Caco-2 (cell line): ENCODE measurements at regions of chr12 and their contacts with region 1.

Region 1: DNA sequence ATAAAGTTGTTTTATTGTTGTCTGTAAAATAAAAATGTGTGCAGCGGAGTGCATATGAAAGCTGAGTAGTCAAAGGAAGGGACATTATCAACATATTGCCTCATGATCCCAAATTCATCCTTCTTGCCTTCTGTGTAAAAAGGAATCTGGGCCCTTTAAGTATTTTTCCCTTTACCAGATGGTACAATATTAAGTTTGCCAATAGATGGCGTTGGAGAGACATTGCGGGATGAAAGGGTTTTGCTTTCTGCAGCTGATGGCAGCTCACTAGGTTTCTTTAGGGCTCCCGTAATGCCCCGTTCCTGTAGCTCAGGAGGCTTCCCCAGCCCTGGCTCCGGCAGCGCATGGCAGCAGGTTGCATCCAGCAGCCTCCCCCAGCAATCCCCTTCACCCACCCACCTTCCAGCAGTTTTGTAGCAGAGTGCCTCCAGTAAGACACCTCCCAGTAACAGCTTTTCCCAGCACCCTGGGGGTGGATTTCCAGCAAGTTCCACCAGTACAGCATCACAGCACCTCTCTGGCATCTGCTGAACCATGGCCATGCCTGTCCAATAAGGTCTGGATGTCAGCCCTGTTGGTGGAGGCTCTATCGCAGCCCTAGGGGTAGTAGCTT is 354.4 kb downstream of the MED13L start:
- DNase-seq: peak in 1 of 2 experiments; percentile 63
- H3K4me3 ChIP-seq: no peak overlapping the region
- H3K4me3 Mint-ChIP-seq: no peak overlapping the region
- H3K27ac Mint-ChIP-seq: no peak overlapping the region
- H3K4me1 ChIP-seq: no peaks in the 10 kb centered on the region
- H3K4me1 Mint-ChIP-seq: no peaks in the 10 kb centered on the region
- H3K27me3 ChIP-seq: no peaks in the 10 kb centered on the region
- H3K27me3 Mint-ChIP-seq: peaks cover 10% of the 10 kb centered on the region
- CTCF ChIP-seq: peak; percentile 54 to 61

Region 2: GRCh38 chr12:115785548-115785947 is 137.5 kb before region 1 on chr12:
- CTCF ChIA-PET with region 1: no interaction called
- POLR2A ChIA-PET with region 1: no interaction called
- intact Hi-C with region 1: no loop called
- DNase-seq: no peak
- H3K4me3 ChIP-seq: no peak overlapping the region
- H3K4me3 Mint-ChIP-seq: no peak overlapping the region
- H3K27ac Mint-ChIP-seq: no peak overlapping the region
- H3K4me1 ChIP-seq: no peaks in the 10 kb centered on the region
- H3K4me1 Mint-ChIP-seq: no peaks in the 10 kb centered on the region
- H3K27me3 ChIP-seq: no peaks in the 10 kb centered on the region
- H3K27me3 Mint-ChIP-seq: peaks cover 8% of the 10 kb centered on the region
- CTCF ChIP-seq: peak; percentile 20 to 26

Region 3: DNA sequence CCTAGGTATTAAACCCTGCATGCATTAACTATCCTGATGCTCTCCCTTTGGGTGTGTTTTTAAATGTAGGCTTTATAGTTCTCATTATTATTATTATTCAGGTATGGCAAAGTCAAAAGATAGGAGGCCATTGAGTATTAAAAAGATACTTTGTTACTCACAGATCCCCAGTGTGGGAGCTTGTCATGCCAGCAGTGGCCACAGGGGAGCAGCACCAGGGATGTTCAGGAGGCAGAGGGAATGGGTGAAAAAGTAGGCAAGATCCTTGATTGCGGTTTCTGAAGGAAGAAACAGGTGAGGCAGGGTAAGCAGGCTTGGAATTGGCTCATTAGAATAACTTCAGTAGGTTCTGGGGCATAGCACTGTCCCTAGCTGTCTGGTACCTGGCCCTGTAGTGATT is 27.8 kb before region 1 on chr12:
- CTCF ChIA-PET with region 1: no interaction called
- POLR2A ChIA-PET with region 1: no interaction called
- intact Hi-C with region 1: no loop called
- DNase-seq: peak in 1 of 2 experiments; percentile 24
- H3K4me3 ChIP-seq: no peak overlapping the region
- H3K4me3 Mint-ChIP-seq: no peak overlapping the region
- H3K27ac Mint-ChIP-seq: no peak overlapping the region
- H3K4me1 ChIP-seq: no peaks in the 10 kb centered on the region
- H3K4me1 Mint-ChIP-seq: no peaks in the 10 kb centered on the region
- H3K27me3 ChIP-seq: no peaks in the 10 kb centered on the region
- H3K27me3 Mint-ChIP-seq: peaks cover 5% of the 10 kb centered on the region
- CTCF ChIP-seq: peak; percentile 20 to 38

Region 4: GRCh38 chr12:115946867-115947696 is 24.0 kb after region 1 on chr12:
- CTCF ChIA-PET with region 1: interaction called, 14 read pairs
- POLR2A ChIA-PET with region 1: no interaction called
- intact Hi-C with region 1: loop called (anchors 1 kb)
- DNase-seq: no peak
- H3K4me3 ChIP-seq: no peak overlapping the region
- H3K4me3 Mint-ChIP-seq: no peak overlapping the region
- H3K27ac Mint-ChIP-seq: no peak overlapping the region
- H3K4me1 ChIP-seq: no peaks in the 10 kb centered on the region
- H3K4me1 Mint-ChIP-seq: no peaks in the 10 kb centered on the region
- H3K27me3 ChIP-seq: no peaks in the 10 kb centered on the region
- H3K27me3 Mint-ChIP-seq: no peaks in the 10 kb centered on the region
- CTCF ChIP-seq: peak; percentile 59 to 61

Region 5: DNA sequence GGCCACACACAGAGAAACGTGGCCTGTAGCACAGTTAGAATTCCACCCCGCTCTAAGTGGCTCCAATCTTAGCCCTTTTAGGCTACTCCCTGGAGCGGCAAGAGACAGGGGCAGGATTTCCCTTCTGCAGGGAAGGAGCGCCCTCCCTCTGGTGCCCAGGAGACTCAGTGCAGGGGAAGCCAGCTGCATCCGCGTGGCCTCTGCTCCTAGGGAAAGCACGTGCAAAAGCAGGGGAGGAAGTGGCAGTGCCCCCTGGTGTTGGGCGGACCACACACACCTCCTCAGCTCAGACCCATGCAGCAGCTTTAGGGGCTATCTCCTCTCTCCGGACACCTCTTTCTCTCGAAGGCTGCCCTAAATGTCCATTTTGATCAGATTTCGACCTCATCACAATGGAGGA is 764.8 kb after region 1 on chr12:
- CTCF ChIA-PET with region 1: no interaction called
- POLR2A ChIA-PET with region 1: interaction called, 10 read pairs
- intact Hi-C with region 1: no loop called
- DNase-seq: peak; percentile 77 to 79
- H3K4me3 ChIP-seq: no peak overlapping the region
- H3K4me3 Mint-ChIP-seq: no peak overlapping the region
- H3K27ac Mint-ChIP-seq: no peak overlapping the region
- H3K4me1 ChIP-seq: no peaks in the 10 kb centered on the region
- H3K4me1 Mint-ChIP-seq: peaks cover 14% of the 10 kb centered on the region
- H3K27me3 ChIP-seq: no peaks in the 10 kb centered on the region; the same call in 1 of the 2 replicates
- H3K27me3 Mint-ChIP-seq: no peaks in the 10 kb centered on the region
- CTCF ChIP-seq: peak; percentile 59 to 83